Right ventricle myocardium inferior (tissue), 1 donor: ENCODE measurements at regions of chr9 and their contacts with region 1.

Region 1: DNA sequence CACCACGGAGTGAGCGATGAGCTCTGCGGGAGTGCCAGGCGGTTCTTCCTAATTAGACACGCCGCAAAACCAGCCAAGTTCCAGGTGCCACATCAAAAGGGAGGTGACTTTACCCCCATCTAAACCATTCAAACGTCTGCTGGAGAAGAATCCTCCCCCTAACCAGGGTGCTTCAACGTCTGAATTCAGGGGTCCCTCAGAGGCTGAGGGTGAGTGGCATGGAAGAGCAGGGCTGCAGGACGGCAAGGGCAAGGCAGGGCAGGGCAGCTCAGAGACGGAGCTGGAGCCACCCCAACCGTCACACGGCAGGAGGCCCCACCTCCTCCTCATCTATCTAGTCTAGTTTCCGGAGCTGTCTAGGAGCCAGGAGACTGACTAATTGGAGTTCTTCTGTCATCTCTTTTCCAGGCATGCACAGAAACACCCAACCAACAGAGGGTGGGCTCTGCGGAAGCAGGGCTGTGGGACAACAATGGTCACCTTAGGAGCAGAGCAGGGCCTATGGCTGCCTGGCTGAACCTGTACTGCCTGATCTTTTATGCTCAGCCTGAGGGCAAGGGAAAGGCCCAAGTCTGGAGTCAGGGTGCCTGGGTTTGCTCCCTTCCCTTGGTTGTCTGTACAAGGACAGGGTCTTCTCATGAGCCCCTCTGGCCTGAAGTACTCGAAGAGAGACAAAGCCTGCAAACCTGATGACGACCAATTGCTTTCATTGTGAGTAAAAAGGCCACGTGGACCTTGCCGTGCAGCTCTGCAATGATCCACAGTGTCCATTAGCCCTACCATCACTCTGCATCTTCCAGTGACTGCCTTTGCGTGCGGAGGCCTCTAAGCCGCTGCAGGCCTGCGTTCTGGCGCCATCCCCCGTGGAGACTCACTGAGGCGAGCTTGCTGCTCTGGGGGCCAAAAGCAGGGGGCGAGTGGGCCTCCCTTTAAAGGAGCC is 81.0 kb upstream of the SLC25A51 start:
- DNase-seq: no peak
- ATAC-seq: peak; percentile 68

Region 2: DNA sequence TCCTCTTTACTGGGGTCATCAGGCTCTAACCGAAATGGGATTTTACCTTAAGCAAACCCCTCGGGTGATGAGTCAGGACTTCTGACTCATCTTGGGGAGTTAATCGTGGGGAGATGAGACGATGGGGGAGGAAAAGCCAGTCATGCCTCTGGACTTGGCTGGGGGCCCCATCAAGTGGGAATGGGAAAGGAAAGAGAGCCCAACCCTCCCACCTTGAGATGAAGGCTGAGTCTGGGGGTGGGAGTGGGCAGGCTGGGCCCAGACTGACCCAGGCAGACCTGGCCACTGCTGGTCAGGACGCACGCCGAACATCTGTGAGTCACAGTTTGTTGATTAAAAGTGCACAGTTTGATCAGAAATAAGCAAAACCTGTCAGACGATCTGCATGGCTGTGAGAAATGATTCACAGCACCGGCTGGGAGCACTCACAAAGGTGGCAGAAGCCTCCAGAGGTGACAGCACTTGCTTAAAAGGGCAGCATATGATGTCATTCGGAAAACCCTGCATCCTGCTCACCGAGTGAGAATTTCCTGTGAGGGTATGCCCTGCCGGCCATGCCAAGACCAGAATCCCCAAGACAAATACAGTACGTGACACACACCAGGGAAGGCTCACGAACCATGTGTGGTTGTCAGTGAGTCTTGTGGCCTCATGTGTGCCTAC is 31.0 kb before region 1 on chr9:
- intact Hi-C with region 1: loop called (anchors 5 kb)
- DNase-seq: no peak
- ATAC-seq: no peak